ENCODE measurements at regions of chr12 and their contacts with region 1.

Region 1: GRCh38 chr12:51874013-51874412 is 13.9 kb upstream of the ANKRD33 start:
- DNase-seq: no peak

Region 2: GRCh38 chr12:51846911-51847642 is 26.9 kb before region 1 on chr12:
- intact Hi-C with region 1: loop called in 1 of 2 experiments (anchors 1 kb)
- DNase-seq: no peak

Region 3: DNA sequence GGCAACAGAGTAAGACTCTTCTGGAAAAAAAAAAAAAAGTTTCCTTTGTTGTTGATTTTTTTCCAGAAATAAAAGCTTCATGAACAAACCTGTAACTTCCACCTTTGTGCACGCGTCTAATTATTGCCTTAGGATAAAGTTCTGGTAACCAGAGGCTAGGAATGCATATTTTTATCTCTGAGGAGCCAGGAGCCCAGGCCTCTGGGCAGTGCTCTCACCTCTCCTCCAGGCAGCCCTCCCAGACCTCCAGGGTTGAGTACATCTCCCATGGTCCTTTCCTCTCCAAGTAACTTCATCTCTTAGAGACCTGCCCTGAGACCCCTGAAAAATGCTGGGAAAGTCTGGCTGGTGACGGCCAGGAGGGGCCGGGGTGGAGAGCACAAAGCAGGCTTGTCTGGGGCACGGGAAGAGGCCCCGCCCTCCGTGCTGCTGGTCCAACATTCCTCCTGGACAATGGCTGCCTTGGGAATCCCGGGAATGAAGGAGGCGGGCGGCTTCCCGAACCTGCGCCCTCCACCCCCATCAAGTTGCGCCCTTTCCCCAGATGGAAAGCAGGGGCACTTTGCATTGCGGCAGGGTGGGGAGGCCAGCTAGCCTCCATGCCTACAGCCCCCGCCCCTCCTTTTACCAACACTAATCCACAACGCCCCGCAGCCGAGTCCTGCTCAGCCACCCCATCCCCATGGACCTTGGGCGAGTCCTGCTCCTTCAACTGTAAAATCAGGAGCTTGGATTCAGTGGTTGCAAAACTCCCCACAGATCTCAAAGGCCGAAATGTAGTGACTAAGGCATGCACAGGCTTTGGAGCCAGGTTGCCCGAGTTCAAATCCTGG is 18.2 kb before region 1 on chr12:
- intact Hi-C with region 1: loop called in 1 of 2 experiments (anchors 1 kb)
- DNase-seq: peak; percentile 83